Activated CD4-positive, alpha-beta memory T cell treated with anti-CD3 and anti-CD28 coated beads, Interleukin-2, amount 10 ng/mL, durations not matched to agents 7 days and 5 days (primary cell): ENCODE measurements at regions of chr12 and their contacts with region 1.

Region 1: GRCh38 chr12:12334367-12335040 is 15.5 kb downstream of the MANSC1 start:
- DNase-seq: peak; percentile 65
- H3K4me3 Mint-ChIP-seq: no peak overlapping the region
- H3K27ac Mint-ChIP-seq: no peak overlapping the region
- H3K4me1 Mint-ChIP-seq: peaks cover 23% of the 10 kb centered on the region
- H3K27me3 Mint-ChIP-seq: peaks cover 13% of the 10 kb centered on the region

Region 2: DNA sequence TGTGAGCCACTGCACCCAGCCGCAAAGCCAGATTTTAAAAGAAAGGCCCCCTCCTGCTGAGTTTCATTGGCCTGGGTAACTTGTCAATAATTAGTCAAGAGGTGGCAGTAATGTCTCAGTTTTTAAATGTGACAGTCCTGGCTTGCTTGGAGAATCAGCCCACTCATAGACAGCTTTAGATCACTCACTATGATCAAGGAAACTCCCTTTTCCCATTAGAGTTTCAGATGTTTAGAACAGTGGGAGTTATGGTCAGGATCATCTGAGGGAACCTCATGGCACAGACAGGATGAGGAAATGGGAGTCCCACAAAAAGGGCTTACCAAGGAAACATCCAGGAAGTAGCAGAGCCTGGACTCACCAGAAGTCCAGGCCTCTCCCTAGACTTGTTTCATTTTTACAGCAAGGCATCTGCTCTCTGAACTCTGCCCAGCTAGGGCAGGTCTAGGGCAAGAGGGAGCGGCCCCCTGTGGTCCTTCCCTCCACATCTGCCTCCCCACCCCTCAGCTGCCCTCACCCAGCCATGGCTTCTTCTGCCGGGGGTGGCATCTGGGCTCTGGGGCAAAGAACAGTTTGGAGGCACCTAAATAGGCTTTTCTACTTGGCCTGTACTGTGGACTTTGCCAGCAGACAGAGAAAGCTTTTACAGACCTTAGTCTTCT is 252.5 kb before region 1 on chr12:
- CTCF ChIA-PET with region 1: interaction called, 25 read pairs
- POLR2A ChIA-PET with region 1: no interaction called
- DNase-seq: no peak
- H3K4me3 Mint-ChIP-seq: no peak overlapping the region
- H3K27ac Mint-ChIP-seq: no peak overlapping the region
- H3K4me1 Mint-ChIP-seq: peaks cover 3% of the 10 kb centered on the region
- H3K27me3 Mint-ChIP-seq: no peaks in the 10 kb centered on the region

Region 3: GRCh38 chr12:12349711-12350665 is 15.5 kb after region 1 on chr12 and contains the start of gene MANSC1:
- CTCF ChIA-PET with region 1: interaction called, 13 read pairs
- POLR2A ChIA-PET with region 1: interaction called, 5 read pairs
- DNase-seq: peak; percentile 65
- H3K4me3 Mint-ChIP-seq: peak within 1 kb of the TSS; percentile 63
- H3K27ac Mint-ChIP-seq: no peak within 1 kb of the TSS
- H3K4me1 Mint-ChIP-seq: peaks cover 20% of the 10 kb centered on the region
- H3K27me3 Mint-ChIP-seq: peaks cover 15% of the 10 kb centered on the region
- total RNA-seq, gene MANSC1: 0.10 to 0.15 TPM